ENCODE measurements at regions of chr15 and their contacts with region 1.

Region 1: DNA sequence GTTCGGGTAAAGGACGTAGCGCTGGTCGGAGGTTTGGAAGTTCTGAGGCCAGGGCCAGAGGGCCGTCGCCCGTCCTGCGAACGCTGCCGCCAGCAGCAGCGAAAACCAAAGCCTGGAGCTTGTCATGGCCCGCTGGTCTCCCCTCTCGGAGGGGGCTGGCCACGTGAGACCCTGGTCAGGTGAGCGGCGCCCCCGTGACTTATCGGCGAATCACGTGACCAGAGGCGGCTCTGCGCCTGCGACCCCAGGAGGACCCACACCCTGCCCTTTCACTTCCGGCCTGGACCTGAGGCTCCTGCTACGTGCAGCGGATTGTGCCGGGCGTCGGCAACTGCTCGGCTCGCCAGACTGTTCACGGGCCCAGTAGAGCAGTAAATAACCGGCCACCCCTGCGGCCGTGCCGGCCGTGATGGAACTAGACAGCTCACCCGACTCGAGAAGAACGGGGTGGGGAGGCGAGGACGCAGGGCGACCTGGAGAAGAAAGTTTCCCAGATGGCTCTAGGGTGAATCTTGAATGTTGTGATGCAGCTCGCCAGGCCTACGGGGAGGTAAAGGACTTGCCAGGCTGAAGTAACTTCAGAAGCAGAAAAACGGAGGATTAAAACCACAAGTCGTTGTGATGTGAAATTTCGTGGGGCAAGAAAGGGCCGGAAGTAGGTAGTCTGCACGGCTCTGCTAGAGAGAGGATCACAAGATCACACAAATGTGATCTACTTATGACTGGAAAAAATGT is at the start of gene HEXA:
- DNase-seq: peak; percentile 98
- H3K4me3 Mint-ChIP-seq: peak within 1 kb of the TSS; percentile 83
- H3K27ac Mint-ChIP-seq: peak within 1 kb of the TSS; percentile 92
- H3K4me1 Mint-ChIP-seq: peaks cover 41% of the 10 kb centered on the region
- H3K27me3 Mint-ChIP-seq: no peaks in the 10 kb centered on the region
- total RNA-seq, gene HEXA: 110 to 111 TPM

Region 2: GRCh38 chr15:72358650-72359288 is 17.2 kb before region 1 on chr15:
- CTCF ChIA-PET with region 1: no interaction called
- POLR2A ChIA-PET with region 1: interaction called, 17 read pairs
- DNase-seq: peak; percentile 26
- H3K4me3 Mint-ChIP-seq: no peak overlapping the region
- H3K27ac Mint-ChIP-seq: peak overlapping the region; percentile 2
- H3K4me1 Mint-ChIP-seq: peaks cover 23% of the 10 kb centered on the region
- H3K27me3 Mint-ChIP-seq: no peaks in the 10 kb centered on the region

Region 3: GRCh38 chr15:72365844-72366243 is 10.2 kb before region 1 on chr15:
- CTCF ChIA-PET with region 1: interaction called, 5 read pairs
- POLR2A ChIA-PET with region 1: interaction called, 24 read pairs
- DNase-seq: peak; percentile 49
- H3K4me3 Mint-ChIP-seq: no peak overlapping the region
- H3K27ac Mint-ChIP-seq: peak overlapping the region; percentile 59
- H3K4me1 Mint-ChIP-seq: peaks cover 30% of the 10 kb centered on the region
- H3K27me3 Mint-ChIP-seq: no peaks in the 10 kb centered on the region

Region 4: DNA sequence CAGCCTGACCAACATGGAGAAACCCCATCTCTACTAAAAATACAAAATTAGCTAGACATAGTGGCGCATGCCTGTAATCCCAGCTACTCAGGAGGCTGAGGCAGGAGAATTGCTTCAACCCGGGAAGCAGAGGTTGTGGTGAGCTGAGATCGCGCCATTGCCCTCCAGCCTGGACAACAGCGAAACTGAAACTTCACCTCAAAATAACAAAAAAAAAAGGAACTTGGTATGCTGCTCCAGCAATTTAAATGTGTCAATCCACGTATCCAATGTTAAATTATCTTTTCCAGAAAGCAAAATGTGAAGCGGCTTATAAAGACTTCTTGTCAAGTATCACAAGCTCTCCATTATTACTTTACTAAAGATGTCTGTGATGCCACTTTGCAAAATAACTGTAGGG is 88.2 kb after region 1 on chr15:
- CTCF ChIA-PET with region 1: interaction called, 4 read pairs
- POLR2A ChIA-PET with region 1: interaction called, 26 read pairs
- DNase-seq: no peak
- H3K4me3 Mint-ChIP-seq: no peak overlapping the region
- H3K27ac Mint-ChIP-seq: no peak overlapping the region
- H3K4me1 Mint-ChIP-seq: peaks cover 12% of the 10 kb centered on the region
- H3K27me3 Mint-ChIP-seq: no peaks in the 10 kb centered on the region

Region 5: DNA sequence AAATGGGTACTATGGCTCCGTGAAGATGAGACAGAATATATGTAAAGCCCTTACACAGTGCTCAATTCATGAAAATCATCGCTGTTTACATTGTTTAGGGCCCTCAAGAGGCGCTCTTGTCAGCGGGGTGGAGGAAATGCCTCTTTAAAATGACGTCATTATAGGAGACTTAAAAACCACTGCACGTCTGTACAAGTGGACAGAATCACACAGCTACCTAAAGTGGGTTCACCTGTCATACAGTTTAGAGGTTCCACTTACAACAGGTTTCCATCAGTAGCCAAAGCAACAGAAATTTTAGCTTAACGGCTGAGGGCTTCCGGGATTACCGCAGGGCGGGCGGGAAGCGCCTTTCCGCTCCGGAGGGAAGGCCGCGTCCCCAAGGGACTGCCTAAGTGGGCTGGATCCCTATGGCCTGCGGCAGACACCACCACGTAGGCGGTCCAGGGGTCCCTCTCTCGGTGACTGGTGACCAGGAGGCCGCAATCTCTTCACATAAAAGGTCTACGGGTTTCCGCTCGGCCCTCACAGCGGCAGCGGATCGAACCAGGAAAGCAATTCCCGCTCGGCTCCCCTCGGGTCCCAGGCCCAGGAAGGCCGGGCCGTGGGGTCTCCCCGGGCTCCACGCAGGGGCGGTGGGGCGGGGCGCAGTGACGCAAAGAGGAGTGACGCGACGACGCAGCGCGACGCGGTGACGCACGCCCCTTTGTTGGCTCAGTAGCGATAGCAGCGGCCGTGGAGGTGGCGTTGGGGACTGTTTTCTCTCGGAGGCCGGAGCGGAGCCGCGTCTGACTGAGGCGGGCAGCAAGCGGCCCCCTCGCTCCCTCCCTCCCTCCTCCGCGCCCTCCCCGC is 97.8 kb after region 1 on chr15 and contains the start of gene ARIH1:
- CTCF ChIA-PET with region 1: no interaction called
- POLR2A ChIA-PET with region 1: interaction called, 72 read pairs
- DNase-seq: peak; percentile 95
- H3K4me3 Mint-ChIP-seq: peak within 1 kb of the TSS; percentile 91
- H3K27ac Mint-ChIP-seq: peak within 1 kb of the TSS; percentile 98
- H3K4me1 Mint-ChIP-seq: peaks cover 43% of the 10 kb centered on the region
- H3K27me3 Mint-ChIP-seq: no peaks in the 10 kb centered on the region
- total RNA-seq, gene ARIH1: 133 to 138 TPM

Measured in activated CD4-positive, alpha-beta memory T cell treated with anti-CD3 and anti-CD28 coated beads, Interleukin-2, amount 10 ng/mL, durations not matched to agents 7 days and 5 days (primary cell).